IMR-90 (cell line): ENCODE measurements at regions of chr5 and their contacts with region 1.

Region 1: DNA sequence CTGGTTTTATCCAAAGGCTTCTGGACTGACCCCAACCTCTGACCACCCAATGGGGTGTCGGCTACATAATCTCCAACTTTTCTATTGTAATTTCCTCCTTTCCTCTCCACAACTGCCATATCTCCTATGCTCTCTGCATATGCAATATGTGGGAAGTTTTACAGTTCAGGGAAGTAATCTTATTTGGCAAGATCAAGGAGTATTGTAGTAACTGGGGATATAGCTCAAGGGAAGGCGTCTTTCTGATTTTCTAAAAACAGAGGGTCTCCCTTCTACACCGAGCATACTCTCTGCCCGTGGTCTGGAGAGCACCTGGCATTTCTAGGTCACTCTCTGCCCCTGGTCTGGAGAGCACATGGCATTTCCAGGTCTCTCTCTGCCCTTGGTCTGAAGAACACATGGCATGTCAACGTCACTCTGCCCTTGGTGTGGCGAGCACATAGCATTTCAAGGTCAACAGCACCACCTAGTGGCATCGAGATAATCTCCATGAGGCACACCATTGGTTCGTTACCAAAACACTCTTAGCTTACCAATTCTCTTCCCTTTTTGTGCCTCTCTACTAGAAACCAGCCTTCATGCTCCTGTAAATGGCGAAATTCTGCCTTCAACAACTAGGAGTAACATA is 616.4 kb upstream of the NUDT12 start:
- DNase-seq: peak; percentile 63
- ATAC-seq: peak; percentile 83
- H3K4me3 ChIP-seq: no peak overlapping the region
- H3K27ac ChIP-seq: no peak overlapping the region
- H3K4me1 ChIP-seq: no peaks in the 10 kb centered on the region
- H3K27me3 ChIP-seq: no peaks in the 10 kb centered on the region
- CTCF ChIP-seq: peak; percentile 73
- POLR2A ChIP-seq: no peak
- RAD21 ChIP-seq: peak; percentile 90

Region 2: DNA sequence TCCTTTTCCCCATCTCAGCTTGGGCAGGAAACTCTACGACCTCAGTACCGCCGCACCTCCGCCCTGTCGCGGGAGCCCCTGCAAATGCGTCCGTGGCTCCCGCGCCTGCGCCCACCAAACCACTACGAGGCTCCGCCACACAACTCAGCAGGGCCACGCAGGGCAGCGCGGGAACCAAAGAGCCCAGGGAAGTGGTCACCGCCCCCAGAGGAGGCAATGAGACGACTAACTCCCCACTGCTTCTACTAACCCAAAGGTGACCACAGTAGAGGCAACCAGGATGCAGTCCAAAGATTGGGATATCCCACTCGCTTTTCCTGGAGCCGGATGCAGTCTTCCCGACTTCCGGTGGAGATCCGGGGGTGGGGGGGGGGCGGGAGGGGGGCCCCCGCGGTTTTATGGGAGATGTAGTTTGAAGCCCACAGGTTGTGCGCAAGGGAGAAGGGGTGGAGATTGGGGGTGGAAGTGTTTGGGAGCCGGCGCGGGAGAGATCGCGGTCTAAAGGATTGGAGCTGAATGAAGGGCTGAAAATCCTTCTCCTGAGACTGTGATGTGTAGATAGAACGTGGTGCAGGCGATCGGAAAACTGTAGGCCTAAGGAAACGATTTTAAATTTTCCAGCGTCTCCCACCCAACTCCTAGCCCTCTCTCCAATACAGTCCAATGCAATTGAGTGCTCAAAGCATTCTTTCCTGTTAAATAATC is 616.3 kb before region 1 on chr5 and contains the start of gene NUDT12:
- CTCF ChIA-PET with region 1: no interaction called
- POLR2A ChIA-PET with region 1: no interaction called
- dilution Hi-C with region 1: no loop called
- in situ Hi-C with region 1: loop called (anchors 10 kb)
- intact Hi-C with region 1: no loop called
- DNase-seq: peak; percentile 67
- ATAC-seq: peak; percentile 96
- H3K4me3 ChIP-seq: peak within 1 kb of the TSS; percentile 81
- H3K27ac ChIP-seq: peak within 1 kb of the TSS; percentile 94
- H3K4me1 ChIP-seq: no peaks in the 10 kb centered on the region
- H3K27me3 ChIP-seq: no peaks in the 10 kb centered on the region
- CTCF ChIP-seq: no peak
- POLR2A ChIP-seq: peak; percentile 45; the same call in 1 of the 2 replicates
- RAD21 ChIP-seq: no peak
- total RNA-seq, gene NUDT12: 5.9 and 10.0 TPM in 2 replicates

Region 3: DNA sequence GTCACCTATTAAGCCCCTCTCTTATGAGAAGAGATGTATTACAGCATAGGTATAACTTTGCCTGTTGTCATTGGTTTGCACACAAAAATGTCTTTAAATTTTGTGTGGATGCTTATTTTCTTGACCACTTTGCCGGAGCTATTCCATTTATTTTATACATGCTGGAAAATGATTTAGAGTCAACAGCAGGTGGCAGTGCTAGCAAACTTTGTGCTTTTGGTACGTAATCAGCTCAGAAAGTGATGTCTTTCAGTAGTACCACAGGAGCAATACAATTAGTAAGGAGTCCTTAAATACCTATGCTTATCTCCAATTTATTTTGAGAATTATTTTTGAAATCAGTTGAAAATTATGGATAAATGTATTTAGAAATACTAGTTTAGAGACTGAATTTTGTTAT is 596.6 kb before region 1 on chr5:
- CTCF ChIA-PET with region 1: interaction called, 17 read pairs
- POLR2A ChIA-PET with region 1: no interaction called
- dilution Hi-C with region 1: loop called (anchors 25 kb)
- in situ Hi-C with region 1: no loop called
- intact Hi-C with region 1: loop called (anchors 1 kb)
- DNase-seq: peak; percentile 50
- ATAC-seq: no peak
- H3K4me3 ChIP-seq: no peak overlapping the region
- H3K27ac ChIP-seq: no peak overlapping the region
- H3K4me1 ChIP-seq: no peaks in the 10 kb centered on the region
- H3K27me3 ChIP-seq: no peaks in the 10 kb centered on the region
- CTCF ChIP-seq: peak; percentile 56
- POLR2A ChIP-seq: no peak
- RAD21 ChIP-seq: peak; percentile 59